Activated T-helper 2 cell treated with anti-CD3 and anti-CD28 coated beads, Interferon-gamma antibody, Interleukin-2, Interleukin-4, amounts not matched to agents 10 μg/mL and 5 μg/mL and 100 μg/mL, durations not matched to agents 14 hours and 24 hours and 36 hours (primary cell): ENCODE measurements at regions of chr1 and their contacts with region 1.

Region 1: GRCh38 chr1:234730770-234731568 is 121.0 kb upstream of the IRF2BP2 start:
- DNase-seq: peak; percentile 36
- H3K4me3 Mint-ChIP-seq: no peak overlapping the region
- H3K27ac Mint-ChIP-seq: peak overlapping the region; percentile 97
- H3K4me1 Mint-ChIP-seq: peaks cover 74% of the 10 kb centered on the region
- H3K27me3 Mint-ChIP-seq: no peaks in the 10 kb centered on the region

Region 2: DNA sequence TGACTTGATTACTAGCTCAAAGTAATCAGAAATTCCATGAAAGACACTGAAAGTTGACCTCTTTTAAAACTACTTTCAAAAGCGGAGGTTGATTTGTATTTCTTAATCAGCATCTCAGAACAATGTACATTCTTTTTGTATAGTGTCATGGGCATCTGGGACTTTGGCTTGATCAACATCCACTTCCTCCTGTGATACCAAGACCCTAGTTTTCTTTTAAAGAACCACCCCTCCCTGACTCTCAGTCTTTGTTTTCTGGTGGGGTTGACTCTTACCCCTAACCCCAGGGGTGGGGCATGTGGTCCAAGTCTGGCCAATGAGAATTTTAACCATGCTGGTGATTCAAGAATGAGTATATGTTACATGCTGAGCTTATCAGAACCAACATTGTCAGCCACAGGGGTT is 99.2 kb before region 1 on chr1:
- intact Hi-C with region 1: no loop called
- DNase-seq: no peak
- H3K4me3 Mint-ChIP-seq: no peak overlapping the region
- H3K27ac Mint-ChIP-seq: no peak overlapping the region
- H3K4me1 Mint-ChIP-seq: peaks cover 3% of the 10 kb centered on the region
- H3K27me3 Mint-ChIP-seq: no peaks in the 10 kb centered on the region

Region 3: GRCh38 chr1:234862944-234863515 is 132.1 kb after region 1 on chr1:
- intact Hi-C with region 1: loop called (anchors 1 kb)
- DNase-seq: no peak
- H3K4me3 Mint-ChIP-seq: no peak overlapping the region
- H3K27ac Mint-ChIP-seq: no peak overlapping the region
- H3K4me1 Mint-ChIP-seq: peaks cover 30% of the 10 kb centered on the region
- H3K27me3 Mint-ChIP-seq: no peaks in the 10 kb centered on the region

Region 4: GRCh38 chr1:234875953-234876855 is 145.2 kb after region 1 on chr1:
- intact Hi-C with region 1: loop called (anchors 2 kb)
- DNase-seq: no peak
- H3K4me3 Mint-ChIP-seq: no peak overlapping the region
- H3K27ac Mint-ChIP-seq: peak overlapping the region; percentile 88
- H3K4me1 Mint-ChIP-seq: peaks cover 63% of the 10 kb centered on the region
- H3K27me3 Mint-ChIP-seq: no peaks in the 10 kb centered on the region

Region 5: DNA sequence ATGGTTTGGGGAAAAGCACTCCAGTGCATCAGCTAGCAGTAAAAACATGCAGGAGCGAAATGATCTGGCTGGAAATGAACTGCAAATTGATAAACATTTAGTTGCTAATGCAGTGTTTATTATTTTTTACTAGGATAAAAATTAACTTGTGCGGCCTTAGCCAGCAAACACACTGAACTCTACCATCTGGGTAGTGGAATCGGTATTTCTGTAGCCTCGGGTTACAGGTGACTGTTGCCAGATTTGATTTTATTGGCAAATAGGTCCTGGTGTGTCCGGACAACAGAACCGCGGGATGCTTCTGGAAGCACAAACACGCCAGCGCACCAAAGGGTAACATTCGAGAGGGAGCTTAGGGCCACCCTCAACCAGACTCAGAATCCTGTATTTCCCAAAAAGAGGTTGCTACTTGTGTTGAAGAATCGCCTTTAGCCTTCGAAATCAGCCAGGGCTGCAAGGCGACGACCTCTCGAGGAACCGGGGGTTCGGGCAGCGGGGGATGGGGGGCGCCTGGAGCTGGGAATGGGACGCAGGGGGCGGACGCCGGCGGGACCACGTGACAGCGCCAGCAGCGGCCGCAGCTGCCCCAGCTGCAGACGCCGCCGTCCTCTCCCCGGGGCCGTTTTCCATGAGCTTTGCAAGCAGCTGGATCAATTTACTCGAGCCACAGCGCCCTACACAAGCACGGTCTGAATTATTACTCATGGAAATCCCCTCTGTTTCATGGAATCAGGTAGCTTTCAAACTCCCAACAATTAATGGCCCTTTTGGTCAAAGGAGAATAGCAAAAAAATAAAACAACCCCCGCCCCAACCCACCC is 238.8 kb after region 1 on chr1:
- intact Hi-C with region 1: no loop called
- DNase-seq: no peak
- H3K4me3 Mint-ChIP-seq: no peak overlapping the region
- H3K27ac Mint-ChIP-seq: peak overlapping the region; percentile 85
- H3K4me1 Mint-ChIP-seq: peaks cover 62% of the 10 kb centered on the region
- H3K27me3 Mint-ChIP-seq: no peaks in the 10 kb centered on the region